Heart right ventricle (tissue), 16 donors: ENCODE measurements at regions of chr9 and their contacts with region 1.

Region 1: GRCh38 chr9:806285-807156 is 35.0 kb upstream of the DMRT1 start:
- DNase-seq: no peak
- ATAC-seq: no peak
- H3K4me3 ChIP-seq: no peak overlapping the region
- H3K27ac ChIP-seq: no peak overlapping the region
- H3K4me1 ChIP-seq: no peaks in the 10 kb centered on the region
- H3K27me3 ChIP-seq: peaks cover 0 to 4% (median 0%) of the 10 kb centered on the region in 7 donors
- CTCF ChIP-seq: peak; percentile 42 to 74 (median 70)

Region 2: GRCh38 chr9:347667-348292 is 458.7 kb before region 1 on chr9:
- intact Hi-C with region 1: loop called in 1 of 10 experiments (anchors 5 kb)
- DNase-seq: no peak
- ATAC-seq: peak in 6 of 8 donors; percentile 40 to 74 (median 58)
- H3K4me3 ChIP-seq: no peak overlapping the region
- H3K27ac ChIP-seq: no peak overlapping the region
- H3K4me1 ChIP-seq: peaks cover 0 to under 1% (median 0%) of the 10 kb centered on the region in 9 donors
- H3K27me3 ChIP-seq: peaks cover 0 to 34% (median 4%) of the 10 kb centered on the region in 7 donors
- CTCF ChIP-seq: peak; percentile 32 to 82 (median 66)

Region 3: DNA sequence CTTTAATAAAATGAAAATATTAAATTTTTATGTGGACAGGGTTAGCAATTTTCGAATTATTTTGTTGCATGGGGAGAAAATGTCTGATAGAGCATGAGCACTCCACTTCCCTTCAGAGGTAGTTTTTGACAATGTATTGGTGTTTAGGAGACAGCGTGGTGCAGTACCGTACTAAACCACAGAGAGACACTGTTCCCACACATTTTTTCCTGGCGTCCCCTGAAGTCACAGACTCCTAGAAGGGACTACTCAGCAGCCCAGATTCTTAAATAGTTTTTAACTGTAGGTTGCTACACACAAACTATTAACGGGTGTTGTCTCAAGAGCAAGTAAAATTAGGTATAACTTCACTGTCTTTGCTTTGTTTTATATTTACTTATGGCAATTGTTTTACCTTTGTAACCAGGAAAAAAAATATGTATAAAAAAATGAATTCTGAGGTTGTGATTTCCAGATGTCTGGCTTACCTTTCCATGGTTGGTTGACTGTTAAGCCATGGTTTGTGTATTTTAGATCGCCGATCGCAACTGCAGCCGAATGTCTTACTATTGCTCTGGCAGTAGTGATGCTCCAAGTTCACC is 420.6 kb before region 1 on chr9:
- intact Hi-C with region 1: loop called in 9 of 10 experiments (anchors 2 to 10 kb)
- DNase-seq: peak in 1 of 2 donors; percentile 45
- ATAC-seq: peak in 7 of 8 donors; percentile 69 to 89 (median 86)
- H3K4me3 ChIP-seq: no peak overlapping the region
- H3K27ac ChIP-seq: no peak overlapping the region
- H3K4me1 ChIP-seq: no peaks in the 10 kb centered on the region
- H3K27me3 ChIP-seq: peaks cover 0 to 3% (median 0%) of the 10 kb centered on the region in 7 donors
- CTCF ChIP-seq: peak; percentile 69 to 91 (median 87)

Region 4: DNA sequence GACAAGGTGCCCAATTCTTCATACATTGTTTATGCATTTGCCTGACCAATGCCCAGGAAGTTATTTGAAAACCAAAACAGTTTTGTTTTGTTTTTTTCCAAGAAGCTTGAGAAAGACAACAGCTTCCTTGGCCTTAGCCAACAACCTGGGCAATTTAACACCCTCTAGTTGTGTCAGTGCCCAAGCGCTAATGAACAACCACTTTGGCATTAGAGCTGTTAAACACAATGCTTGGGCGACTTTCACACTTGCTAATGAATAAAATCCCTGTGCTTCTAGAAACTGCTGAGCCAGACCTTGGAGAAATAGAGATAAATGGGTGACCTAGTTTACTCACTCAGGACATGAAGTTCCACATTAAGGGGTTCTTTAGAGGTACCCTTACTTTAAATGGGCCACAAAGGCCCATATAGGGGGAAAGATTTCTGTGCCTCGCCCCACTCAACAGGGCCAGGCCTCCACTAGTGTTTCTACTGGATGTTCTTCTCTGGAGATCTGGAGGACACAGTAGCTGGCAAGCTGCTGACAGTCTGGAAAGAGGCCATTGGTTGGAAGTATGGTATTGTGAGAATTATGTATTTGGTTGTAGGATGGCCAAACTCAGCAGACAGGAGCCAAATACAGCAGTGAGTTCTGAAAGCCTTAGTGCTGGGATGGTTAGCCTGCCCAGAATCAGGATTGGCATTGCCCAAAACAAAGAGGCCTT is 412.0 kb before region 1 on chr9:
- intact Hi-C with region 1: loop called in 8 of 10 experiments (anchors 5 to 10 kb)
- DNase-seq: no peak
- ATAC-seq: peak in 1 of 8 donors; percentile 33
- H3K4me3 ChIP-seq: no peak overlapping the region
- H3K27ac ChIP-seq: no peak overlapping the region
- H3K4me1 ChIP-seq: no peaks in the 10 kb centered on the region
- H3K27me3 ChIP-seq: no peaks in the 10 kb centered on the region
- CTCF ChIP-seq: no peak